ENCODE measurements at regions of chr20 and their contacts with region 1.

Region 1: DNA sequence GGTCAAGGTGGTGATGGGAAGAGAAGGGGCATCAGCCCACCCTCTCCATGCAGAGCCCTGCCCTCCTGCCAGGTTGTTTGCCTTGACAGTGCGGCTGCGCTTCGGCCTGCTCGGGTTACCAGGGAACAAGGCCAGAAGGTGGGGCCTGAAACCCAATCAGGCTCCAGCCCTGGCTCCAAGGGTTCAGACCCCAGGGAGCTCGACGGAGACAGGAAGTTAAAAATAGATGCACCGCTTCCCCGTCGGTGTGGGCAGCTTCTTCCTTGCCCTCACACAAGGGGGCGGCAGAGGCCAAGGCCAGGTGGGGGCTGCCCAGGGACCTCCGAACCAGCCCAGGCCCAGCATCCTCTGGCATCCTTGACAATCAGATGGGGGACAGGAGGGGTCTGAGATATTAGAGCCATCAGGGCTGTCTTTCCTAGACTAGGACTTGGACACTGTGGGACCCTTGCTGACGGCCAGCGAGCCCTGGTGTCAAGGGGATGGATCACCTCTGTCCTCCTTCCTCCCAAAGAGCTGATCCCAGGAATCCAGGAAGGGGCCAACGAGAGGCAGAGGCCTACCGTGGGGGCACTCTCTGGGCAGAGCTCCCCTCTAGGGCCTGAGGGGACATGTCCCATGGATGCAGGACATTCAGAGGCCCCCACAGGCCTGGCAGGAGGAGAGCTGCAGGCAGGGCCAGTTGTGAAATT is 65.2 kb downstream of the RIPOR3 start:
- DNase-seq: no peak
- H3K4me3 ChIP-seq: no peak overlapping the region
- H3K27ac ChIP-seq: peak overlapping the region; percentile 64
- H3K4me1 ChIP-seq: peaks cover 19% of the 10 kb centered on the region
- H3K27me3 ChIP-seq: no peaks in the 10 kb centered on the region
- CTCF ChIP-seq: peak in 2 of 3 experiments; percentile 39 to 48
- POLR2A ChIP-seq: no peak

Region 2: GRCh38 chr20:50713657-50714101 is 87.5 kb after region 1 on chr20:
- intact Hi-C with region 1: loop called (anchors 10 kb)
- DNase-seq: no peak
- H3K4me3 ChIP-seq: no peak overlapping the region
- H3K27ac ChIP-seq: no peak overlapping the region
- H3K4me1 ChIP-seq: peaks cover 4% of the 10 kb centered on the region
- H3K27me3 ChIP-seq: no peaks in the 10 kb centered on the region
- CTCF ChIP-seq: peak in 1 of 3 experiments; percentile 32
- POLR2A ChIP-seq: no peak

Region 3: DNA sequence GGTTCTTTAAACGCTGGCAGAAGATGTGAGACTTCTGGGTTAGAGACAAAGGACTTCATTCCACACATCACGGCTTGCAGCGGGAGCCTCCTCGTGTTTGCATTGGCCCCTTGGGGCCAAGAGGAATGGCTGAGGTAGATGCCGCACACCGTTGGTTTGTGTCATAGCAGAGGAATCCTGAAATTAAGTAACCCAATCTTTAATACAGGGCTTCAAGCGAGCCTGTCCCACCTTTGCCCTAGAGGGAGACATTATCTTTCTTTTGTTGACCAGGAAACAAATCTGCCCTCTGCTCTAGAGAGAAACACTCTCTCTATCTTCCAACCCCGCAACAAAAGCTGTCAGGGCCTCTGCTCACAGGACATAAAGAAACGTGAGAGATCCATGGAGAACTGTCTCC is 1843.0 kb after region 1 on chr20:
- intact Hi-C with region 1: no loop called
- DNase-seq: no peak
- H3K4me3 ChIP-seq: no peak overlapping the region
- H3K27ac ChIP-seq: no peak overlapping the region
- H3K4me1 ChIP-seq: no peaks in the 10 kb centered on the region
- H3K27me3 ChIP-seq: no peaks in the 10 kb centered on the region
- CTCF ChIP-seq: no peak
- POLR2A ChIP-seq: no peak

Measured in vagina (tissue), 2 donors.